ENCODE measurements at regions of chr7 and their contacts with region 1.

Region 1: GRCh38 chr7:29639881-29640595 is 76.4 kb downstream of the PRR15 start:
- DNase-seq: no peak
- ATAC-seq: no peak

Region 2: DNA sequence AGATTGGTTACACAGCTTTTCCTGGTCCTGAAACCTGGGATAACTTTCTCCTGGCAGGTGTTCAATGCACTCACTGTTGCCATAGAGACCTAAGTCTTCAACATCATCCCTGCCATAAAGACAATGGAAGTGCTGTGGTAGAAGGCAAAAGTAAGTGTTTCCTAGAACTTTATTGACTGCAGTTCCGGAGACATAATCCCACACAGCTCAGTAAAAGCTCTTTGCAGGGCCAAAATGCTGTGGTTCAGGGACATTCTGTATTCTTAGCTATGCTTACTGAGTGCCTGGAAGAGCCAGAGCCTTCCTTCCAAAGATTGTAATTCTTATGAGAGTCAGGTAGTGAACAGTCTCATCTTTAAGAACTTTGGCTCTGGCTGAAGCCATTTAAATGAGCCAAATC is 171.5 kb after region 1 on chr7:
- intact Hi-C with region 1: no loop called
- DNase-seq: no peak
- ATAC-seq: no peak

Region 3: GRCh38 chr7:29921404-29922010 is 281.5 kb after region 1 on chr7:
- intact Hi-C with region 1: loop called (anchors 5 kb)
- DNase-seq: no peak
- ATAC-seq: peak; percentile 89

Measured in left ventricle myocardium superior (tissue), 1 donor.